Naive thymus-derived CD4-positive, alpha-beta T cell (primary cell): ENCODE measurements at regions of chr1 and their contacts with region 1.

Region 1: GRCh38 chr1:2556277-2556677 is at the start of gene TNFRSF14:
- DNase-seq: peak; percentile 47 to 82 (median 75)
- ATAC-seq: peak; percentile 76
- H3K4me3 ChIP-seq: peak within 1 kb of the TSS; percentile 83
- H3K4me3 Mint-ChIP-seq: peak within 1 kb of the TSS; percentile 89 to 100 (median 99)
- H3K27ac ChIP-seq: peak within 1 kb of the TSS; percentile 93
- H3K27ac Mint-ChIP-seq: peak within 1 kb of the TSS; percentile 89 to 99 (median 99)
- H3K4me1 ChIP-seq: peaks cover 25 to 28% of the 10 kb centered on the region in 2 donors
- H3K4me1 Mint-ChIP-seq: peaks cover 12 to 42% (median 36%) of the 10 kb centered on the region in 7 donors
- H3K27me3 ChIP-seq: no peaks in the 10 kb centered on the region
- H3K27me3 Mint-ChIP-seq: no peaks in the 10 kb centered on the region
- total RNA-seq, gene TNFRSF14: 182 to 253 (median 204) TPM

Region 2: DNA sequence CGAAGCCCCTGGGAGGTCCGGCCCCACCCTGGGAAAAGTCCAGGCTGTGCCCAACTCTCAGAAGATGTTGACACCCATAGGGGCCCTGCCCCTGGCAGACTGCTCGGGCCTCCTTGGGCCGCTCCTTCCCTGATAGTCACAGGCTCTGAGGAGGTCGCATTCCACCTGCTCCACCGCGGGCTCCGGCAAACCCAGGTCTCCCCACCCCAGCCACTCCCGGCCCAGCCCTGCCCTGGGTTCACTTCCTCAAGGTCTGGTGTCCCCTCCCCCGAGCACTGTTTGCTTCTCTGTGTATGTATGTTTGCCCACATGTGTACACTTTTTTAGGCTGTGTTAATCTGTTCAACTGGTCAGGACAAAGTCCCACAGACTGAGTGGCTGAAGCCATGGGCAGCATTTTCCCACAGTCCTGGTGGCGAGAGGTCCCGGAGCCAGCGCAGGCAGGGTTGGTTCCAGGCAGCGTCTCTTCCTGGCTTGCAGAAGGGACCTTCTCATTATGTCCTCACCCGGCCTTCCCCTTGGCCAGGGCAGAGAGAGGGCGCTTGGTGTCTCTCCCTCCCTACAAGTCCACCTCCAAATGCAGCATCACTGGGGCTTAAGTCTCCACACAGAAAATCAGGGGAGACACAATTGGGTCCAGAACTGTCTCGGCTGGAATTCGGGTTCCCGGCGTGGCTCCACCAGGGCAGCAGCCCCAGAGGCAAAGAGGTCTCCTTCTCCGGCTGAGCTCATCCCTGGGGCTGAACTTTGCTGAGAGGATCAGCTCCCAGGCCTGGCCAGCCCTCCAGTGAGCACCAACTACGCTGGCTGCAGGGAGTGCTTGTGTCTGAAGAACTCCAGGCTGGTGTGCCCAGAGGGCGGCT is 19.8 kb after region 1 on chr1:
- CTCF ChIA-PET with region 1: interaction called, 13 read pairs
- POLR2A ChIA-PET with region 1: interaction called, 253 read pairs
- intact Hi-C with region 1: loop called (anchors 1 kb)
- DNase-seq: no peak
- ATAC-seq: no peak
- H3K4me3 ChIP-seq: no peak overlapping the region
- H3K4me3 Mint-ChIP-seq: peak overlapping the region in 3 of 10 donors; percentile 25 to 76 (median 35)
- H3K27ac ChIP-seq: peak overlapping the region; percentile 8
- H3K27ac Mint-ChIP-seq: peak overlapping the region in 7 of 9 donors; percentile 43 to 96 (median 62)
- H3K4me1 ChIP-seq: peaks cover 20 to 33% of the 10 kb centered on the region in 2 donors
- H3K4me1 Mint-ChIP-seq: peaks cover 23 to 59% (median 48%) of the 10 kb centered on the region in 7 donors
- H3K27me3 ChIP-seq: no peaks in the 10 kb centered on the region
- H3K27me3 Mint-ChIP-seq: no peaks in the 10 kb centered on the region

Region 3: GRCh38 chr1:2610036-2610959 is 54.0 kb after region 1 on chr1:
- CTCF ChIA-PET with region 1: no interaction called
- POLR2A ChIA-PET with region 1: no interaction called
- intact Hi-C with region 1: no loop called
- DNase-seq: no peak
- ATAC-seq: no peak
- H3K4me3 ChIP-seq: no peak overlapping the region
- H3K4me3 Mint-ChIP-seq: no peak overlapping the region
- H3K27ac ChIP-seq: no peak overlapping the region
- H3K27ac Mint-ChIP-seq: no peak overlapping the region
- H3K4me1 ChIP-seq: no peaks in the 10 kb centered on the region
- H3K4me1 Mint-ChIP-seq: no peaks in the 10 kb centered on the region
- H3K27me3 ChIP-seq: no peaks in the 10 kb centered on the region
- H3K27me3 Mint-ChIP-seq: peaks cover 0 to 9% (median 0%) of the 10 kb centered on the region in 5 donors

Region 4: DNA sequence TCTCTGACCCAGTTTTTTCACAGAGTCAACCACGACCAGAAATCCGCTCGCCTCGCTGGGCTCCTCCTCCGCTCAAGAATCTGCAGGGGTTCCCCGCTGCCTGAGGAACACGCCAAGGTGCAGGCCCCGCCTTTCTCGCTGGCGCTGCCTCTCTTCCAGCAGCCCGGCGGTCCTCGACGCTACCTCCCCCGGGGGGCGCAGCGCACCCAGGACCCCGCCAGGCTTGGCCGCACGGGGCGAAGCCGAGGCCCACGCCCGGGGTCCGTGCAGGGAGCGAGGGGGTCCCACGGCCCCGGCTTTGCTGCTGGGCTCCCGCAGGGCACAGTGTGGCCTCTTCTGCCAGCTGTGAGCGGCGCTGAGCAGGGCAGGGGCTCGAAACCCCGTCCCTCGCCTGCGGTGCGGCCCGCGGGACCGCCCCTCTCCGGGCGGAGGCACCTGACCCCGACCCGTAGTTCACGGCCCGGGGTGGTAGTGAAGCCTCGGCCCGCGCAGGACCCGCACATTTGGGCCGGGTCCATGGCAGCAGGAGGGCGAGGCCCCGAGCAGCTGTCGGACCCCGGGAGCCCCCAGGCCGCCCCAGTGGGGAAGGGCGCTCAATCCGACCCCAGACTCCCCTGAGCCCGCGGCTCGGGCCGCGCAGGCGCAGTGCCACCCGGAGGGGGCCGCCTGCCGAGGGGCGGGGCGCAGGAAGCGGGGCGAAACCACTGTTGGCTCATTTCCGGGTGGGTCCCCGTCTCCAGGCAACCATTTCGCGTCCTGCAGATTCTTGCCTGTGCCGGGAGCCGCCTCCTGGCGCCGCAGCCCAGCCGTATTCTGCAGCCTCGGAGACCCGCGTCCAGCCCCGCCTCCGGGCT is 86.5 kb after region 1 on chr1:
- CTCF ChIA-PET with region 1: interaction called, 3 read pairs
- POLR2A ChIA-PET with region 1: interaction called, 7 read pairs
- intact Hi-C with region 1: loop called in 1 of 2 experiments (anchors 1 kb)
- DNase-seq: peak; percentile 92 to 97 (median 96)
- ATAC-seq: peak; percentile 89
- H3K4me3 ChIP-seq: peak overlapping the region; percentile 87
- H3K4me3 Mint-ChIP-seq: peak overlapping the region; percentile 85 to 96 (median 88)
- H3K27ac ChIP-seq: peak overlapping the region; percentile 97
- H3K27ac Mint-ChIP-seq: peak overlapping the region in 8 of 9 donors; percentile 76 to 93 (median 86)
- H3K4me1 ChIP-seq: peaks cover 9% of the 10 kb centered on the region in 2 donors
- H3K4me1 Mint-ChIP-seq: peaks cover 6 to 19% (median 15%) of the 10 kb centered on the region in 7 donors
- H3K27me3 ChIP-seq: no peaks in the 10 kb centered on the region
- H3K27me3 Mint-ChIP-seq: peaks cover 0 to 3% (median 0%) of the 10 kb centered on the region in 5 donors

Region 5: GRCh38 chr1:2786329-2787162 is 230.3 kb after region 1 on chr1:
- CTCF ChIA-PET with region 1: interaction called, 11 read pairs
- POLR2A ChIA-PET with region 1: interaction called, 4 read pairs
- intact Hi-C with region 1: no loop called
- DNase-seq: peak; percentile 42 to 78 (median 63)
- ATAC-seq: peak; percentile 75
- H3K4me3 ChIP-seq: no peak overlapping the region
- H3K4me3 Mint-ChIP-seq: no peak overlapping the region
- H3K27ac ChIP-seq: no peak overlapping the region
- H3K27ac Mint-ChIP-seq: no peak overlapping the region
- H3K4me1 ChIP-seq: peaks cover 0 to 6% of the 10 kb centered on the region in 2 donors
- H3K4me1 Mint-ChIP-seq: peaks cover 4 to 15% (median 11%) of the 10 kb centered on the region in 7 donors
- H3K27me3 ChIP-seq: peaks cover 0 to 9% of the 10 kb centered on the region in 2 donors
- H3K27me3 Mint-ChIP-seq: peaks cover 23 to 37% (median 30%) of the 10 kb centered on the region in 5 donors